Lower lobe of right lung (tissue), 2 donors: ENCODE measurements at regions of chr1 and their contacts with region 1.

Region 1: DNA sequence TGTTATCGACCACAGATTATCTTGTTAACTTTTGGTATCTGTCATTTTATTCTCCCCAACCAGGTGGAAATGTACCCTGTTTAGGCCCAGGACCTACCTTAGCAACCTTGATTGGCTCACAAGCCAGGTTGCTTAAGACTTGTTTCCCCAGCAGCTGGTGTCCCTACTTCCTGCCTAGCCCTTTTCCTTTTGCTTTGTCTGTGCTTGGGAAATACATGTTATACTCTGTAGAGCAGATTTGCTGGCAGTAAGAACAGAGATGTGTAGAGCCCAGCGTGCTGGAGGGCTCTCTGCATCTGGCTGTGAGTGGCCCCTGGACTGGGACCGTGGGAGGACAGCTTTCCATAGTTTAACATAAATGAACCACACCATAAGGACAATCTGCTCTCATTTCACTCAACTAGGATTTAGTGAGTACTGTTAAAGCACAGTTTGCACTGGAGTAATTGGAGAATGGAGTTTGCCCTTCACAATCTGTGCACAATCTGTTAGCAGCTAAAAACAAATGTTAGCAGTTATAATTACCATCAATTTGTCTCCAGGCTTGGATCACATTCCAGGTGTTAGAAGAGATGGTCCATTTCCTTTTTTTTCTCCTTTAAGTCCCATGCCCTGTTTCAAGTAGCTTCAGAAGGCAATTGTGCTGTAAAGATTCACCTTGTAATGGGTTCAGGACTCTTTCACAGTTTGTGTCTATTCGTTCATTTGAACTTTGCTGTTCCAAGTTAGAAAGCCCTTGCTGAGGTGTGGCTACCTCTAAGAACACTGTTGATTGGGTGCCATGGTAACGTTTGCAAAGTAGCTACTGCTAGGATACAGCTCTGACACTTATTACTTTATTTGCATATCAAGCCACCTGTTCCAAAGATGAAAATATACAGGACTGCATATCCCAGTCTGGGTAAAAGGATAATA is at the start of gene APOBEC4:
- DNase-seq: no peak
- ATAC-seq: peak; percentile 88 to 89
- H3K4me3 ChIP-seq: no peak within 1 kb of the TSS
- H3K27ac ChIP-seq: peak within 1 kb of the TSS; percentile 73
- H3K4me1 ChIP-seq: peaks cover 27% of the 10 kb centered on the region
- H3K27me3 ChIP-seq: no peaks in the 10 kb centered on the region
- CTCF ChIP-seq: no peak
- total RNA-seq, gene APOBEC4: 3.0 TPM

Region 2: DNA sequence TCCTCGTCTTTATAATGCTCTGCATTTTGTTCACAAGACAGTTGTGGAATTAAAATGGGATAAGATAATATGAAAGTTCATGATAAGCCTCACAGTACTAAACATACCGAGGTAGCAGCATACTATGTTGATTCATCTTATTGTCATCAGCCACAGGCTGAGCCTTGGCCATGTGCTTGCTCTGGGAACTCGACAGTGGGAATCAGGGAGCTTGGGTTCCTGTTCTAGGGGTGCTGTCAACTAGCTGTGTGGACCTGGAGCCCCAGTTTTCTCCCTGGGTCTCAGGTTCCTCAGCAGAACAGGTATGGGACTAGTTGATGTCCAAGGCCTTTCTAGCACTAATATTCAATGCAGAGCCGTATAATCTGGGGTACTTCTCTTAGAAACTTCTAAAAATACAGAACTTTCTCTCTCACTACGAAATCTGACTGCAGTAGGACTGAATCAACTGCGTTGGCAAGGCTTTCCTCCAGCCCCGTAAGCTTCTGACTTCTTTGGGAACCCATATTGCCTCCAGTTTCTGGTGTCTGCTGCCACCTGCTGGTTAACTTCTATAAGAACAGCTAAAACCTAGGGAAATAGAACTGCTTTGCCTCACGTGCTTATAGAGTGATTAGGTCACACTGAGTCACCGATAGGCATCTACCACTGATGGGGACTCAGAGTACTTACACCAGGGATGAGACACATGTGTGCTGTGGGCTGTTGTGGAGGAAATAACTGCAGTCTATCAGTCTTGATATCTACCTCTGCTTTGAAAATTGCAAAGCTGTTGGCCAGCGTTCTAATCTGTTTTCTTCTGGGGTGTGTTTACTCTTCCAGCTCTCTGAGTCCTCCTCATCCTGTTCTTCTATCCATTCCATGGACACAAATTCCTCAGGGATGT is 263.1 kb after region 1 on chr1:
- intact Hi-C with region 1: loop called (anchors 5 kb)
- DNase-seq: no peak
- ATAC-seq: peak; percentile 90 to 94
- H3K4me3 ChIP-seq: no peak overlapping the region
- H3K27ac ChIP-seq: peak overlapping the region; percentile 47
- H3K4me1 ChIP-seq: peaks cover 32% of the 10 kb centered on the region
- H3K27me3 ChIP-seq: no peaks in the 10 kb centered on the region
- CTCF ChIP-seq: peak; percentile 82